ENCODE measurements at regions of chr1 and their contacts with region 1.

Region 1: DNA sequence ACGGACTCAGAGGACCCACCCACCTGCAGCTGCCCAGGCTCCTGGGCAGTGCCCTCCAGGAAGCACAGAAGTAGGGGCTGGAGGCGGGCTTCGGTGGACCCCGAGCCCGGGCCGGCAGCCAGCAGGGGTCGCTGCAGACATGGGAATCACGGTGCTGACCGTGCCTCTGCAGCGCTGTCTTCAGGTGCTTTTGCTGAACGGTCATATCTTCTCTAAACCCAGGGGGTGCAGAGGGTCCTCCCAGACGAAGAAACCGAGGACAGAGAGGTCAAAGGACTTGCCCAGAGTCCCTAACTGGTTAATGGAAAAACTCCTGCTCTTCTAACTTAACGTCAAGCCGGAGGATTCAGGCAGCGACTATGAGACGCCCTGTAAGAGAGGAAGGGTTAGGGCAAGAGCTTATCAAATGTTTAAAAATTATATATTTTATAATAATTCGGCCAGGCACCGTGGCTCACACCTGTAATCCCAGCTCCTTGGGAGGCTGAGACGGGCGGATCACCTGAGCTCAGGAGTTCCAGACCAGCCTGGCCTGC is 21.5 kb upstream of the LEFTY2 start:
- DNase-seq: peak; percentile 82
- CTCF ChIP-seq: peak; percentile 84

Region 2: DNA sequence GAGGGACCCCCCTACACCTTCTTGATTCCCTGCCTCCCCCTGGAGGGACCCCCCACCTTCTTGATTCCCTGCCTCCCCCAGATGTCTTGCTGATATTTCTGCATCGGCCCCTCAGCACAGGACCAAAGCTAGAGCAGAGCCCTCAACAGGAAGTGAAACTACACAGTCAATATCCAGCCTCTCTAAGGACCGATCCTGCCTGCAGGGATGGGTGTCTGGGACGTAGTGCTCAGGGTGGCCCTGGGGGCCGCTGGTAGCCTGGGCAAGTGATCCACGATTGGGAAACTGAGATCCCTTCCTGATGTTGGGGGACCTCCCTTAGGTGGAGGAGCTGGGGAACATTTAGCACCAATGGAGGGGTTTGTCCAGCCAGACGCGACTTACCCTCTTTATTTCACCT is 17.6 kb before region 1 on chr1:
- CTCF ChIA-PET with region 1: interaction called, 30 read pairs
- POLR2A ChIA-PET with region 1: no interaction called
- DNase-seq: peak; percentile 73
- CTCF ChIP-seq: no peak

Region 3: GRCh38 chr1:225950905-225951497 is 11.5 kb before region 1 on chr1:
- CTCF ChIA-PET with region 1: interaction called, 30 read pairs
- POLR2A ChIA-PET with region 1: interaction called, 3 read pairs
- DNase-seq: no peak
- CTCF ChIP-seq: no peak

Region 4: GRCh38 chr1:225977937-225978748 is 15.6 kb after region 1 on chr1:
- CTCF ChIA-PET with region 1: interaction called, 44 read pairs
- POLR2A ChIA-PET with region 1: no interaction called
- DNase-seq: peak; percentile 67
- CTCF ChIP-seq: peak; percentile 26